Cardiac septum (tissue), 1 donor: ENCODE measurements at regions of chr18 and their contacts with region 1.

Region 1: DNA sequence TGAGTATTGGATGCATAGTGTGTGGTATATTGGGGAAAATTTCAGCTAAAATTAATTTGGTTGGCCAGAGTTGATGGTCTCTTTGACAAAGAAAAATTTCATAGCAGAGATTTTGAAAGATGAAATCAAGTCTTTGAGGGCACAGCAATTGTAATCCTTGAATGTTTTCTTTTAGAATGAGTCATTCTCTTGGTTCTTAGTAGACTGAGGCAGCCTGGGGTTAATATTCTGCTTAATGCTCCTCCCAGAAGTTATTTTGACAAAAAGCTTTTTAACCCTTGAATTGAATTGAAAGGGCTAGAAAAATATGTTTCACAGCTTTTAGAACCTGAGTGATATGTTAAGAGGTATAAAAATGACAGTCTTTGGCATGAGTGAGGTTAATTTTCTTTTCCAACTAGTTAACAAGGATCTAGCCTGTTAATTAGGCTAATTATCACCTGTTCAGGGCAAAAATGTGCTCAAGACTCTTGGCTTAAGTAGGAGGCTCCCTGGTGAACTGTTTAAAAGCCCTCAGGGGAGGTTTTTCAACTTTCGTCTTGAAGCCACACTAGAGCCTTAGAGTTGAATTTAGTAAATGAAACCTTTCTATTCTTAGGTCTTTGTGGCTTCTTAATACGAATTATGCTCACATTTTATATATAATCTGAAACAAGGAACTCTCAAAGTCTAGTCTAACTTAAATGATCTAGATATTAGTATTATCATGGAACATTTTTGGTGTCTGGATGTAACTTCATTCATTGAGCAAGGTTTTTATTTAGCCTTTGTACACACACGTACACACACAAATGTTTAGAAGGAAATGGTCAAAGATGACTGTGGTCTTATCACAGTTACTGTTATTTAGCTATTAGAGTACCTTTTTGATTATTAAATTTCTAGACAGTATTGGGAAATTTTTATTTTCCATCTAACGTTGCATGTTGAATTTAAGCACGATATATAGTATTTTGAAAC is 272.5 kb downstream of the ZNF407 start:
- DNase-seq: no peak

Region 2: DNA sequence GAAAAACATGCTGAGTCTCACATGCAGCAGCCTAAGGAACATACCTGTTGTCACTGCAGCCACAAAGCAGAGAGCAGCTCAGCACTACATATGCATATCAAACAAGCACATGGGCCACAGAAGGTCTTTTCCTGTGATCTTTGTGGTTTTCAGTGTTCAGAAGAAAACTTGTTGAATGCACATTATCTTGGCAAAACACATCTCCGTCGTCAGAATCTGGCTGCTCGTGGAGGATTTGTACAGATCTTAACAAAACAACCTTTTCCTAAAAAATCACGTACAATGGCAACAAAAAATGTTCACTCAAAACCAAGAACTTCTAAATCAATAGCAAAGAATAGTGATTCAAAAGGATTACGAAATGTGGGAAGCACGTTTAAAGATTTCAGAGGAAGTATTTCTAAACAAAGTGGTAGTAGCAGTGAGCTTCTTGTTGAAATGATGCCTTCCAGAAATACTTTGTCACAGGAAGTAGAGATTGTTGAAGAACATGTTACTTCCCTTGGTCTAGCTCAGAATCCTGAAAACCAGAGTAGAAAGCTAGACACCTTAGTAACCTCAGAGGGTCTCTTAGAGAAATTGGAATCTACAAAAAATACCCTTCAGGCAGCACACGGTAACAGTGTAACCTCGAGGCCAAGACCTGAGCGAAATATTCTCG is 238.4 kb before region 1 on chr18:
- intact Hi-C with region 1: no loop called
- DNase-seq: no peak

Region 3: GRCh38 chr18:74796841-74797576 is 73.2 kb before region 1 on chr18:
- intact Hi-C with region 1: loop called (anchors 5 kb)
- DNase-seq: no peak